SK-N-SH (cell line): ENCODE measurements at regions of chr4 and their contacts with region 1.

Region 1: GRCh38 chr4:162497564-162498167 is 333.9 kb upstream of the FSTL5 start:
- DNase-seq: peak; percentile 34
- H3K4me3 ChIP-seq: no peak overlapping the region
- H3K27ac ChIP-seq: no peak overlapping the region
- H3K4me1 ChIP-seq: no peaks in the 10 kb centered on the region; a peak in 1 of 4 replicates
- H3K27me3 ChIP-seq: no peaks in the 10 kb centered on the region; the same call in 1 of the 2 replicates
- CTCF ChIP-seq: peak; percentile 84
- EP300 ChIP-seq: no peak
- RAD21 ChIP-seq: peak; percentile 95

Region 2: DNA sequence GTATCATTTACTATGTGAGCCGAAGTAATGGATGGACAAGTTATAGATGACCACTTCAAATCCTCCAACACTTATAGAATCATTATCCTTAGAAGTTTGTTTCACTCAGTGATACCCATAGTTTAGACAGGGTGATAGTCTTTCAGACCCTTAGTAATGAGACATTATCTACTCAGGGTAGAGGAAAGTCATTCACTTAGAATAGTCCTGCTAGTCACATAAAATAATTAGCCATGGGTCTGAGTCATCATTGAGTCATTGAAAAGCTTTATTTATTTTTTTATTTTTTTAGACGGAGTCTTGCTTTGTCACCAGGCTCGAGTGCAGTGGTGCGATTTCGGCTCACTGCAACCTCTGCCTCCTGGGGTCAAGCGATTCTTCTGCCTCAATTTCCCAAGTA is 12.2 kb before region 1 on chr4:
- CTCF ChIA-PET with region 1: interaction called, 18 read pairs
- POLR2A ChIA-PET with region 1: no interaction called
- DNase-seq: no peak
- H3K4me3 ChIP-seq: no peak overlapping the region
- H3K27ac ChIP-seq: no peak overlapping the region
- H3K4me1 ChIP-seq: no peaks in the 10 kb centered on the region; a peak in 1 of 4 replicates
- H3K27me3 ChIP-seq: no peaks in the 10 kb centered on the region
- CTCF ChIP-seq: no peak
- EP300 ChIP-seq: no peak
- RAD21 ChIP-seq: no peak

Region 3: DNA sequence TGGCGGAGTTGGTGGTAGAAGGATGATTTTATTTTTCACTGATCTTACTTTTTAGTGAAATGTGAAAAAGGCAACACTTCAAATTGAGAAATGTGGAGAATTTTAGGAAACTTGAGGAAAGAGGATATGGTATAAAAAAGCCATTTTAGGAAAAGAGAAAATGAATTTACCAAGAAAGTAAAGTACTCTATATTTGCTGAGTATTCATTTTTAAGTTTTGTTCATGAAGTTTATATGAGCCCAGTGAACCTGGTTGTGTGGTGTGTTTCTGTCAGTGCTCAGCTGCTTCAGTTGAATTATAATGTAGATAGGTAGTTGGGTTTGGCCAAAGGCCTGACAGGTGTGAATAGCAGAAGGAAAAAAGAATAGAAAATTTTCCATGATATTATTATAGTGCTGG is 11.7 kb after region 1 on chr4:
- CTCF ChIA-PET with region 1: interaction called, 13 read pairs
- POLR2A ChIA-PET with region 1: no interaction called
- DNase-seq: no peak
- H3K4me3 ChIP-seq: no peak overlapping the region
- H3K27ac ChIP-seq: no peak overlapping the region
- H3K4me1 ChIP-seq: no peaks in the 10 kb centered on the region
- H3K27me3 ChIP-seq: no peaks in the 10 kb centered on the region
- CTCF ChIP-seq: no peak
- EP300 ChIP-seq: no peak
- RAD21 ChIP-seq: no peak

Region 4: GRCh38 chr4:162522724-162523123 is 25.1 kb after region 1 on chr4:
- CTCF ChIA-PET with region 1: interaction called, 13 read pairs
- POLR2A ChIA-PET with region 1: no interaction called
- DNase-seq: no peak
- H3K4me3 ChIP-seq: no peak overlapping the region
- H3K27ac ChIP-seq: no peak overlapping the region
- H3K4me1 ChIP-seq: no peaks in the 10 kb centered on the region
- H3K27me3 ChIP-seq: no peaks in the 10 kb centered on the region; the same call in 1 of the 2 replicates
- CTCF ChIP-seq: no peak
- EP300 ChIP-seq: no peak
- RAD21 ChIP-seq: no peak

Region 5: GRCh38 chr4:163332500-163333406 is 835.1 kb after region 1 on chr4 and contains the start of gene NPY1R:
- CTCF ChIA-PET with region 1: interaction called, 76 read pairs
- POLR2A ChIA-PET with region 1: no interaction called
- DNase-seq: peak; percentile 78
- H3K4me3 ChIP-seq: peak within 1 kb of the TSS; percentile 47 to 61
- H3K27ac ChIP-seq: no peak within 1 kb of the TSS
- H3K4me1 ChIP-seq: peaks cover 4 to 9% of the 10 kb centered on the region in 2 experiments; a peak in 2 of 4 replicates
- H3K27me3 ChIP-seq: peaks cover 22% of the 10 kb centered on the region; the same call in 1 of the 2 replicates
- CTCF ChIP-seq: peak; percentile 80
- EP300 ChIP-seq: no peak
- RAD21 ChIP-seq: peak; percentile 74
- polyA plus RNA-seq, gene NPY1R: not detected in 2 replicates